ENCODE measurements at regions of chr5 and their contacts with region 1.

Region 1: GRCh38 chr5:35129918-35130485 is 82.3 kb upstream of the AGXT2 start:
- DNase-seq: peak; percentile 76
- H3K4me3 Mint-ChIP-seq: no peak overlapping the region
- H3K27ac Mint-ChIP-seq: no peak overlapping the region
- H3K4me1 Mint-ChIP-seq: peaks cover 18% of the 10 kb centered on the region
- H3K27me3 Mint-ChIP-seq: peaks cover 55% of the 10 kb centered on the region

Region 2: DNA sequence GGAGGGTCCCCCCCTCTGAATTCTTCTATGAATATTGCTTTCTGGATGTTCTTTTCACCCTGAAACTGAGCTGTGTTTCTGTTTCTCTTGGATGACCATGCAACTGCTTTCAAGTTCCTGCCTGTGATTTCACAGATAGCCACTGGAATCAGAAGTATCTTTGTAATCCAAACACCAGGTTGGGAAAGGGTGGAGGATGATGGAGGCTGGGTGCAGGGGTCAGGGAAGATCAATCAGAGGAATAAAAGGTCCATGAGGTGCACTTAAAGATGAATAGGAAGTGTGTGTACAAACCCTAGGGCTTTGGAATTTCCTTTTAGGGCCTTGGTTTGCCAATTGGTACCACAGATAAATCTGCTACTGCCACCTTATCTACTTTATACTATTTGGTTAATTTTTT is 14.1 kb before region 1 on chr5:
- CTCF ChIA-PET with region 1: no interaction called
- intact Hi-C with region 1: no loop called
- DNase-seq: no peak
- H3K4me3 Mint-ChIP-seq: no peak overlapping the region
- H3K27ac Mint-ChIP-seq: no peak overlapping the region
- H3K4me1 Mint-ChIP-seq: peaks cover 4% of the 10 kb centered on the region
- H3K27me3 Mint-ChIP-seq: peaks cover 17% of the 10 kb centered on the region

Region 3: DNA sequence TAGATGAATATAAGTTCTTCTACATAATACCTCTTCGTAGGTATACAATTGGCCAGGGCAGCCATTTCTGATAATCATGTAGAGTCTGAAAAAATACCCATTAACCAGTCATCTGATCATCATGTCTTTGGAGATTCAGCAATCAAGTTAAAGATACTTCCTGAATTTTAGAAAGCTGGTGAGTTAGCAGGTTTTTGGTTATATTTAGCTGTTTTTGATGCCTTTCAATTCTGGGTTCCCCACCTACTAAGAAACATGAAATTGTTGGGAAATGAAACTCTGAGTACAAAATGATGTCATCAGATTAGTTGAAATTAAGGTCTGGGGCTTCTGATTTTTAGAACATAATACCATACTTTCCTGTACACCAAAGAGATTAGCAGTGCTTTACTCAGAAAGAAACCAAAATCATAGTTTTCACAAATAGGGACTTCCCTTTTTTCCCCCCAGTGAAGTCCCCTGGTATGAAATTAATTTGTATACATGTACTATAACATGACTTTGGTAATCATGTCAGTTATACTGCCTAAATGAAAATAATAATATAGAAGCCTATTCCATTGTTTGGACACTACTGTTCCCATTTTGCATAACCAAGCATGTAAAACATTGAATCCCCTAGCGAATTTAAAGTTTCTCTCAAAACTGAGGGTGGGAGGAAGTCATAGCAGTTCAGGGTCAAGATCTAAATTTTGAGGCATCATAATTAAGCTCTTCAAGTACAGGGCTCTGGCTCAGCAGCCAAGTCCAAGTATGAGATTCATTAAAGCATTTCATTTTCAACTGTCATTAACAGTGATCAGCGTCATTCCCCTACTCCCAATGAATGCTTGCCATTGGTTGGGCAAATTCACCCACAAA is 82.3 kb after region 1 on chr5:
- CTCF ChIA-PET with region 1: no interaction called
- intact Hi-C with region 1: loop called (anchors 2 kb)
- DNase-seq: no peak
- H3K4me3 Mint-ChIP-seq: no peak overlapping the region
- H3K27ac Mint-ChIP-seq: no peak overlapping the region
- H3K4me1 Mint-ChIP-seq: peaks cover 8% of the 10 kb centered on the region
- H3K27me3 Mint-ChIP-seq: peaks cover 9% of the 10 kb centered on the region

Region 4: GRCh38 chr5:35237580-35238376 is 107.8 kb after region 1 on chr5:
- CTCF ChIA-PET with region 1: no interaction called
- intact Hi-C with region 1: no loop called
- DNase-seq: no peak
- H3K4me3 Mint-ChIP-seq: no peak overlapping the region
- H3K27ac Mint-ChIP-seq: no peak overlapping the region
- H3K4me1 Mint-ChIP-seq: no peaks in the 10 kb centered on the region
- H3K27me3 Mint-ChIP-seq: peaks cover 2% of the 10 kb centered on the region